ENCODE measurements at regions of chr20 and their contacts with region 1.

Region 1: DNA sequence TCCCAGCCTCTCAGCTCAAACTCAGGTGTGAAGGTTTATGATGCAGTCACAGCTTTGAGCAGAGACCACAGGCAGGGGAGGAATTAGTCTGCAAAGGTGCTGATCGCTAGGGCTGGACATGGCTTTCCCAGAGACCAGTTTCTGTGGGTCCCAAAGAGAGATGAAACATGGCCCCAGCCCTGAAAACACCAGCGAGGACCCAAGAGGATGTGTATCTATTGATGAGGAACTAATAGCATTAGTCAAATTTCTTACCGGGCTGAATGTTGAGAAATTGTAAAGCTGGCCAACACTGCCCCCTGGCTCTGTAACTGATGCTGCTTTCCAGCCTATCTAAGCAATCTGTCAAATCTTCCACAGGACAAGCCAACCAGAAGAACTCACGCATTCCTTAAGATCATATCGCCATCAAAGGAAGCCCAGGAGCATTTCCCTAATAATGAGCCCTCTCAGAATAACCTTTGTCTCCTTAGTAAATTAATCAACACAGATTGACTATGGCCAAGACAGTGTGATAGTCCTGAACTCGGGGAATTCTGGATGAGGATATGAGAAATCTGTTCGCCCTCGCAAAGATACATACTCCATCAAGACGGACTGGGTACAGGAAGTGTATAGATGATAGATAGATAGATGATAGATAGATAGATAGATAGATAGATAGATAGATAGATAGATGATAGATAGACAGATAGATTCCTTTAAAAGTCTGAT is 7.8 kb upstream of the ACSS1 start:
- DNase-seq: peak; percentile 68 to 85
- ATAC-seq: peak; percentile 83
- H3K4me3 ChIP-seq: no peak overlapping the region
- H3K27ac ChIP-seq: no peak overlapping the region
- H3K4me1 ChIP-seq: no peaks in the 10 kb centered on the region
- H3K27me3 ChIP-seq: no peaks in the 10 kb centered on the region

Region 2: DNA sequence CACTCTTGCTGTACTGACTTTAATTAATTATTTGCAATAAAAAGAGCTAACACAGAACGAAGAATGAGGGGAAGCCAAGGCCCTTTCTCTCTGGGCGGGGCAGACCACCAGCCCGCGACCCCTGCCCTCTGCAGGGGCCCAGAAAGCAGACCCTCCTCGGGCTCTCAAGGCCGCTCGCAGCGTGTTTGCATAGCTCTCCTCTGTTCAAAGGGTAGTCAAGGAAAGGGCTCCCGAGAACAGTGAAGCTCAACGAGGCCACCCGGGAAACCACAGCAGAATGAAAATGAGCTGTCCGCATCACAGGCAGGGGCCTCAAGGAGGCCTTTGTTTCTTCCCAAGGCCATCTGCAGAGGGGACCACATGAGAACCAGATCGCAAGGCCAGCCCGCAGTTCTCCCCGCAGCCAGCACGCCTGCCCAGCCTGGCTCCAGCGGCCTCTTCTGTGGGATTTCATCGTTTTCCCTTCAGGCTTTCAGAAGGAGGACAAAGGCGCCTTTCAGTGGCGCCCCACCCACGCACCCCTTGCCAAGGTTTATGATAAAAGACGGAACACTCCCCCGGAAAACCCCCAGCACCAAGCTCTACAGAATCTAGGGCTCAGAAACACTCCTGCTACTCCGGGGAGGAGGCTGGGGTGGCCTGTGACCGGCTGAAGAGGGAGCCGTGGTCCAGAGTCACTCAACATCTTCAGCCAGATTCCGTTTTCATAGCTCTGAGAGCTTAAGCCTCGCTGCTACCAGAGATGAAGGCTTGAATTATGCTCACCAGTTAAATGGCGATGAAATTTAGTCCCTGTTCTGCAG is 33.1 kb before region 1 on chr20:
- intact Hi-C with region 1: no loop called
- DNase-seq: peak in 1 of 2 donors; percentile 49
- ATAC-seq: peak; percentile 40
- H3K4me3 ChIP-seq: no peak overlapping the region
- H3K27ac ChIP-seq: no peak overlapping the region
- H3K4me1 ChIP-seq: peaks cover 0 to 6% of the 10 kb centered on the region in 2 donors
- H3K27me3 ChIP-seq: no peaks in the 10 kb centered on the region

Region 3: GRCh38 chr20:25178563-25179438 is 113.0 kb after region 1 on chr20:
- intact Hi-C with region 1: loop called (anchors 2 to 5 kb)
- DNase-seq: peak in 1 of 2 donors; percentile 54
- ATAC-seq: peak; percentile 84
- H3K4me3 ChIP-seq: no peak overlapping the region
- H3K27ac ChIP-seq: peak overlapping the region in 1 of 2 donors; percentile 20
- H3K4me1 ChIP-seq: no peaks in the 10 kb centered on the region
- H3K27me3 ChIP-seq: no peaks in the 10 kb centered on the region

Region 4: DNA sequence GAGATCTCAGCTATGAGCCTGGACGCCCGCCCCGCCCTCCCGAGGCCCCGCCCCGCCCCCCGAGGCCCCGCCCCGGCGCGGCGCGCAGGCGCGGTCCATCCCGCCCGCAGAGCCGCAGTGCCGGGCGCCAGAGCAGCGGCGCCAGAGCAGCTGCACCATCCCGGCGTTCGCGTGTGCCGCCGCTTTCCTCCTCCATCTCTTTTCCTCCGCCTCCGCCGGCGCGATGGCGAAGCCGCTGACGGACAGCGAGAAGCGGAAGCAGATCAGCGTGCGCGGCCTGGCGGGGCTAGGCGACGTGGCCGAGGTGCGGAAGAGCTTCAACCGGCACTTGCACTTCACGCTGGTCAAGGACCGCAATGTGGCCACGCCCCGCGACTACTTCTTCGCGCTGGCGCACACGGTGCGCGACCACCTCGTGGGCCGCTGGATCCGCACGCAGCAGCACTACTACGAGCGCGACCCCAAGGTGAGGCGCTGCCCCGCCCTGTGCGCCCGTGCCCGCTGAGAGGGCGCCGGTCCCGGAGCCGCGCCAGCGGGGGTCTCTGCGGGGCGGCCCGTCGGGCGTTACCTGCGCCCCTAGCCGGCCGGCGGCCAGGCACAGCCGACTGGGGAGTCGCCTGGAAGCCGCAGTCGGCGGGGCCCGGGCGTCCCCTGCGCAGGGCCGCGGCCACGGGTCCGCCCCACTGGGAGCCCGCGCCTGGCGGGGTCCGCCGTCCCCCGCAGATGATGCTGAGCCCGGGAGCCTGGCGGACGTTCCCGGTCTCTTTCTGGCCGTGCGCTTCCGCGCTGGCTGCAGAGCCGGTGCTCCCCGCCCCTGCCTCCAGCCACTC is 182.4 kb after region 1 on chr20 and contains the start of gene PYGB:
- intact Hi-C with region 1: no loop called
- DNase-seq: peak; percentile 88 to 92
- ATAC-seq: peak; percentile 92
- H3K4me3 ChIP-seq: peak within 1 kb of the TSS; percentile 82 to 90
- H3K27ac ChIP-seq: peak within 1 kb of the TSS; percentile 62 to 83
- H3K4me1 ChIP-seq: no peaks in the 10 kb centered on the region
- H3K27me3 ChIP-seq: no peaks in the 10 kb centered on the region
- total RNA-seq, gene PYGB: 92.8 to 95.2 TPM